ENCODE measurements at regions of chr15 and their contacts with region 1.

Region 1: DNA sequence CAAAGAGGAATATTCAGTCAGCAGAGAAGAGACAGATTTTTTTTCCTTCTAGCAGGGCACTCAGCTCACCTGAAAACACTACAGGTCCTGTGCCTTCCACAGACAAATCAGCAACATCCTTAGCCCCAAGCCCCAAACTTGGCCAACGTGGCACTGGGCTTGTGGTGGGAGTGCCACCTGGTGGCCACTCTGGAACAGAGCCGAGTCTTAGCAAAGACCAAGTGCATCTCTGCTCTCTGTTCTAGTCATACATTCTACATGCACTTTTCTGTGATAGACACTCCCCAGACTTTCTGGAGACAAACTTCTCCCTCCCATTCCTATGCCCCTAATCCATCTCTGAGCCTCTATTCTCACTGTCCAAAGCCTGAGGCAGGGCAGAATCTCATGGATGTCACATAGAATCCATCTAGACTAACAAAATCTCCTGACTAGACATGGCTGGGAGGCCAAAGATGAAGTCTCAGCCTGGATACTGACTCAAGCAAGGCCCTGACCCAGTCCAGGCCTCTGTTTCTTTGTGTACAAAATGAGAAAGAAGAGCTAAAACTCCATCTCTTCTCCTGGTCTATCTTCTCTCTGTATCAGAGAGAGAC is 5.1 kb upstream of the SEMA7A start:
- DNase-seq: peak; percentile 55
- ATAC-seq: peak; percentile 83
- H3K4me3 ChIP-seq: no peak overlapping the region
- H3K27ac ChIP-seq: no peak overlapping the region
- H3K4me1 ChIP-seq: peaks cover 18% of the 10 kb centered on the region
- H3K27me3 ChIP-seq: no peaks in the 10 kb centered on the region
- CTCF ChIP-seq: peak; percentile 94 to 97 (median 95)
- EP300 ChIP-seq: no peak
- POLR2A ChIP-seq: no peak
- RAD21 ChIP-seq: peak; percentile 100

Region 2: DNA sequence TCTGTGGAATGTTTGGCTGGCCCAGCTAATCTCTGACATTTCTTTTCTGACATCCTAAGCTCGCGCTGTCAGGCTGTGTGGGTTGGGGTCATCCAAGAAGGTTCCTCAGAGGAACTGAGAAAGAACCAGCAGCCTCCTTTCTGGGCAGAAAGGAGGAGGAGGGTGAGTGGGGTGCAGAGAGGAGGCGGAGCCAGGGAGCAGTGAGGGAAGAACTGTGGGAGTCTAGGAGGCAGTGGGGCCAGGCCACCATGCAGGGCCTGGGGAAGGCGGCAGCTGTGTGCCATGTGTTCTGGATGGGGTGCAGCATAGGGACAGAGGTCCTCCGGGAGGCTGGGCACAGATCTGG is 10.4 kb before region 1 on chr15:
- CTCF ChIA-PET with region 1: interaction called, 48 read pairs
- POLR2A ChIA-PET with region 1: interaction called, 5 read pairs
- RAD21 ChIA-PET with region 1: interaction called, 3 read pairs
- SMC1A ChIA-PET with region 1: interaction called, 16 read pairs
- in situ Hi-C with region 1: no loop called
- intact Hi-C with region 1: no loop called
- DNase-seq: no peak
- ATAC-seq: peak; percentile 55
- H3K4me3 ChIP-seq: peak overlapping the region; percentile 98
- H3K27ac ChIP-seq: peak overlapping the region; percentile 84
- H3K4me1 ChIP-seq: peaks cover 59% of the 10 kb centered on the region
- H3K27me3 ChIP-seq: no peaks in the 10 kb centered on the region
- CTCF ChIP-seq: no peak
- EP300 ChIP-seq: no peak
- POLR2A ChIP-seq: no peak; the same call in 1 of the 2 replicates
- RAD21 ChIP-seq: no peak

Region 3: DNA sequence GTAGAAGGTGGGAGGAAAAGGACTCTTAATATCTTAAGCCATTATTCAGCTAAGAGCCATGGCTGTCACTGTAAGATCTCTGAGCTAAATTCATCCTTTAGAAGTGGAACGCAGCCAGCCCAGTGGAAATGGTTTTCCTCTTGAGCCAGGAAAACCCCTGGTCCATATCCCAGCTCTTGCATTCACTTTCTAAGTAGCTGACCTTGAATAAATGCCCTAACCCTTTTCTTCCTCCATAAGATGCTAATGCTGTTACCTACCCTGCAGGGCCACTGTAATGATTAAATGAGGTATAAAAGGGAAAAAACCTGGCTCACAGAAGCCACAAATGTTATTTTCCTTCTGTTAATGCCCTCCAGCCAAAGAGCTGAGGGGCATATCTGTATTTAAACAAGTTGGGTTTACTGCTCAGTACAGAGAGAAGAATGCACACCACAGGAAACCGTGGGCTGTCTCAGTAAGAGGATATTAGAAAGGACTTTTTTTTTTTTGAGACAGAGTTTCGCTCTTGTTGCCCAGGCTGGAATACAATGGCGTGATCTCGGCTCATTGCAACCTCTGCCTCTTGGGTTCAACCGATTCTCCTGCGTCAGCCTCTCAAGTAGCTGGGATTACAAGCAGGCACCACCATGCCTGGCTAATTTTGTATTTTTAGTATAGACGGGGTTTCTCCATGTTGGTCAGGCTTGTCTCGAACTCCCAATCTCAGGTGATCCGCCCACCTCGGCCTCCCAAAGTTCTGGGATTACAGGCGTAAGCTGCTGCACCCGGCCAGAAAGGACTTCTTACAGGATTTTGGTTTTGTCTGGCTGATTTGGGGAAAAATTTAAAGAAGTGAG is 15.3 kb after region 1 on chr15:
- CTCF ChIA-PET with region 1: interaction called, 26 read pairs
- POLR2A ChIA-PET with region 1: interaction called, 5 read pairs
- RAD21 ChIA-PET with region 1: interaction called, 3 read pairs
- SMC1A ChIA-PET with region 1: interaction called, 23 read pairs
- in situ Hi-C with region 1: no loop called
- intact Hi-C with region 1: no loop called
- DNase-seq: no peak
- ATAC-seq: peak; percentile 89
- H3K4me3 ChIP-seq: no peak overlapping the region
- H3K27ac ChIP-seq: peak overlapping the region; percentile 29
- H3K4me1 ChIP-seq: peaks cover 21% of the 10 kb centered on the region
- H3K27me3 ChIP-seq: no peaks in the 10 kb centered on the region
- CTCF ChIP-seq: no peak
- EP300 ChIP-seq: no peak
- POLR2A ChIP-seq: no peak
- RAD21 ChIP-seq: no peak

Region 4: DNA sequence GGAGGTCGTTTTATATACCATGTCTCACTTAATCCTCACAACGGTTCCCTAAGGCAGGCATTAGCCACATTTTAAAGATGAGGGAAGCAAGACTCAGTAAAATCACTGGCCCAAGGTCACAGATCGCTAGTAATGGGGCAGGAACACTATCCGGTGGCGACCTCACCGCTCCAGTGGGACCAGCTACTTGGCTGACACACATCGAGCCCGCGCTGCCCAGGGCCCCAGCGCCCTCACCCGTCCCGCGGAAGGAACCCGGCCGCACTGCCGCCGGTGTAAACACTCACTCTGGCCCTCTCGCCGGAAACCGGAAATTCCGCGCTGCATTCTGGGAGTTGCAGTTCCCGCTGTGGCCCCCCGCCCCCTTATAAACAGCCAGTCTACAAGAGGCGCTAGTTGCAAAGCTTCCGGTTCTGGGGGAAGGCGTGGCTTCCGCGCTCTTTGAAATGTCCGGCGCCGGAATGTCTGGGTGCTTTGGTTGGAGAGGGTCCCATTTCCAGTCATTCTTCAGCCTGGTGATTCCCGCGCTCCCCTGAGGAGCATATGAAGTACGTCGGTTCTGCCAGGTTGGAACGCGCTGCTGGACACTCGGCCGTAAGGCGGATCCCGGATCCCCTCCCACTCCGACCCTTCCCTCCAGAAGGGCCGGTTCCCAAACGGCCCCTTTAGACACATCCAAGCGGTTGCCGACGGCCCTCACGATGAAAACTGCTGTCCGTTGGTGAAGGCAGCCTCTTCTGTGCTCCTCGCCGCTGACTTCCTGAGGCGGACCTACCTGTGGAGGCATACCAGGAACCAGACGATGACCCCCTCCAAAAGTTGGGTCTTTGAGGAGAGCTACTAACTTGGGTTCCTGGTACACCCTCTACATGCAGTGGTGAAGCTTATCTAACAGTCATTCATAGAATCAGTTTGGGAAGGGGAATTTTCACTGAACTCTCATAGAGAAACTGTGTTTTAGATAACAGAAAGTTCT is 22.3 kb after region 1 on chr15 and contains the start of gene UBL7:
- CTCF ChIA-PET with region 1: interaction called, 26 read pairs
- POLR2A ChIA-PET with region 1: interaction called, 5 read pairs
- RAD21 ChIA-PET with region 1: interaction called, 3 read pairs
- SMC1A ChIA-PET with region 1: interaction called, 5 read pairs
- in situ Hi-C with region 1: no loop called
- intact Hi-C with region 1: loop called (anchors 1 kb)
- DNase-seq: peak; percentile 77
- ATAC-seq: peak; percentile 92
- H3K4me3 ChIP-seq: peak within 1 kb of the TSS; percentile 92
- H3K27ac ChIP-seq: peak within 1 kb of the TSS; percentile 93
- H3K4me1 ChIP-seq: peaks cover 11% of the 10 kb centered on the region
- H3K27me3 ChIP-seq: no peaks in the 10 kb centered on the region
- CTCF ChIP-seq: peak in 2 of 3 experiments; percentile 7 to 48; a peak in 3 of 6 replicates
- EP300 ChIP-seq: no peak
- POLR2A ChIP-seq: peak; percentile 98
- RAD21 ChIP-seq: no peak
- polyA plus RNA-seq, gene UBL7: 25.9 to 59.1 TPM

Region 5: GRCh38 chr15:74489518-74490338 is 50.9 kb after region 1 on chr15:
- CTCF ChIA-PET with region 1: interaction called, 9 read pairs
- POLR2A ChIA-PET with region 1: interaction called, 4 read pairs
- RAD21 ChIA-PET with region 1: interaction called, 3 read pairs
- SMC1A ChIA-PET with region 1: interaction called, 6 read pairs
- in situ Hi-C with region 1: no loop called
- intact Hi-C with region 1: loop called (anchors 2 kb)
- DNase-seq: peak; percentile 53
- ATAC-seq: peak; percentile 96
- H3K4me3 ChIP-seq: no peak overlapping the region
- H3K27ac ChIP-seq: peak overlapping the region; percentile 54
- H3K4me1 ChIP-seq: peaks cover 8% of the 10 kb centered on the region
- H3K27me3 ChIP-seq: no peaks in the 10 kb centered on the region
- CTCF ChIP-seq: peak; percentile 64 to 83 (median 82)
- EP300 ChIP-seq: no peak
- POLR2A ChIP-seq: peak; percentile 66; the same call in 1 of the 2 replicates
- RAD21 ChIP-seq: peak; percentile 65

Region 6: GRCh38 chr15:74511583-74511982 is 72.8 kb after region 1 on chr15:
- CTCF ChIA-PET with region 1: no interaction called
- POLR2A ChIA-PET with region 1: no interaction called
- RAD21 ChIA-PET with region 1: no interaction called
- SMC1A ChIA-PET with region 1: no interaction called
- in situ Hi-C with region 1: no loop called
- intact Hi-C with region 1: no loop called
- DNase-seq: no peak
- ATAC-seq: peak; percentile 80
- H3K4me3 ChIP-seq: no peak overlapping the region
- H3K27ac ChIP-seq: peak overlapping the region; percentile 75
- H3K4me1 ChIP-seq: peaks cover 14% of the 10 kb centered on the region
- H3K27me3 ChIP-seq: no peaks in the 10 kb centered on the region
- CTCF ChIP-seq: no peak
- EP300 ChIP-seq: no peak
- POLR2A ChIP-seq: no peak
- RAD21 ChIP-seq: no peak

Measured in GM12878 (cell line).